PC-9 (cell line): ENCODE measurements at regions of chr6 and their contacts with region 1.

Region 1: GRCh38 chr6:25223490-25223991 is 55.6 kb upstream of the CARMIL1 start:
- DNase-seq: peak; percentile 59 to 71
- H3K4me3 ChIP-seq: no peak overlapping the region
- H3K27ac ChIP-seq: peak overlapping the region; percentile 20; the same call in 1 of the 2 replicates
- H3K4me1 ChIP-seq: peaks cover 7% of the 10 kb centered on the region; the same call in 1 of the 2 replicates
- H3K27me3 ChIP-seq: no peaks in the 10 kb centered on the region
- CTCF ChIP-seq: peak; percentile 95

Region 2: GRCh38 chr6:24631671-24632070 is 591.9 kb before region 1 on chr6:
- CTCF ChIA-PET with region 1: no interaction called
- POLR2A ChIA-PET with region 1: no interaction called
- intact Hi-C with region 1: no loop called
- DNase-seq: no peak
- H3K4me3 ChIP-seq: no peak overlapping the region
- H3K27ac ChIP-seq: no peak overlapping the region
- H3K4me1 ChIP-seq: no peaks in the 10 kb centered on the region
- H3K27me3 ChIP-seq: no peaks in the 10 kb centered on the region
- CTCF ChIP-seq: no peak

Region 3: DNA sequence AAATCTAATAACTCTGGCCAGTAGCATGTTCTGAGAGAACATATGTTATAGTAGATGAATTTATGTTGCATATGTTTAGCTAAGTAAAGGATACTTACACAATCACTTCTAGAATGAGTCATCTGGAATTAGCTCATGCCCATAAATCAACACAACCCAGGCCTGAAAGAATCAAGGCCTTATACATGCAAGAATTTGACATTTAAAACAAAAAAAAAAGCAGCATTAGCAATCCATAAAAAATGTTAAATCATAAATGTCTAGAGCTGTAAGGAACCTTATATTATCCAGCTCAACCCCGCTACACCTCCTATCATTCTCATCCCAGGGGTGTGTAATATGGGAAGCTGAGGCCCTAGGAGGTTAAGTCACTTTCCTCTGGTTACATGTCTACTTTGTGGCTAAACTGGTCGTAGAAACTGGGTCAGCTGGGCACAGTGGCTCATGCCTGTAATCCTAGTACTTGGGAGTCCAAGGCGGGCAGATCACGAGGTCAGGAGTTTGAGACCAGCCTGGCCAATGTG is 49.5 kb before region 1 on chr6:
- CTCF ChIA-PET with region 1: interaction called, 5 read pairs
- POLR2A ChIA-PET with region 1: no interaction called
- intact Hi-C with region 1: loop called (anchors 1 kb)
- DNase-seq: peak; percentile 66 to 98
- H3K4me3 ChIP-seq: no peak overlapping the region
- H3K27ac ChIP-seq: peak overlapping the region; percentile 98
- H3K4me1 ChIP-seq: peaks cover 56% of the 10 kb centered on the region
- H3K27me3 ChIP-seq: no peaks in the 10 kb centered on the region
- CTCF ChIP-seq: no peak

Region 4: DNA sequence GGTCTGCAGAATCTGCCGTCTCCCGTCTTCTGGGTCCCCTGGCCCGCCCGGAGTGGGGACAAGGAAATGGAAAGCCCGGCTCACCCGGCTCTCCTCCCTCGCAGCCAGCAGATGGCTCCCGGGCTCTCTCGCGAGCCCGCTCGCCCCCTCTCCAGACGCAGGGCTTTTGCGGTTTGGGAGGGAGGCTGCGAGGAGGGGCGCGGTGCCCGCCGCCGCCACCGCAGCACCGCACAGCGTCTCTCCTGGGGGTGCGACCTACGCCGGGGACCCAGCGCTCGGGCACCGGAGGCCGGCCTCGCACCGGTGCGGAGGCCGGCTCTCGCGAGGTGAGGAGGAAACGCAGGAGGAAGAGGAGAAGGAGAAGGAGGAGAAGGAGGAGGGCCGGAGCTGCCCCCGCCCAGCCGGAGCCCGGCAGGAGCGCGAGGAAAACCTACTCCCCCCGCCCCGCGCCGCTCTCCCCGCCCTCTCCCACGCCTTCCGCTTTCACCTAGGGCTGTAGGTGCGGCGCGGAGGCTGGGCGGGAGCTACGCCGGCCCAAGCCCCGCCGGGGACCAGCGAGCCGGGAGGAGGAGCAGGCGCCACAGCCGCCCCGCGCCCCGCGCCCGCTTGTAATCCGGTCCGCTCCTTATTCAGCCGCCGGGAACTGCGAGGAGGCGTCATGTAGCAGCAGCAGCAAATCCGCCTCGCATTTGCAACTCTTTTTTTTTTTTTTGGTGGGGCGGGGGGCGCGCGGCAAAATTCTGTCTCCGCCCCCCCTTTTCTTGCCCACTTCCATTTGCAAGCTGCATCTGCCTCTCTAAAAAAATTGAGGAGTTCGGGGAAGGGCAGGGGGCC is 55.6 kb after region 1 on chr6 and contains the start of gene CARMIL1:
- CTCF ChIA-PET with region 1: no interaction called
- POLR2A ChIA-PET with region 1: no interaction called
- intact Hi-C with region 1: loop called (anchors 1 kb)
- DNase-seq: peak; percentile 78 to 94
- H3K4me3 ChIP-seq: peak within 1 kb of the TSS; percentile 96
- H3K27ac ChIP-seq: peak within 1 kb of the TSS; percentile 62
- H3K4me1 ChIP-seq: peaks cover 21% of the 10 kb centered on the region
- H3K27me3 ChIP-seq: no peaks in the 10 kb centered on the region
- CTCF ChIP-seq: peak; percentile 66
- total RNA-seq, gene CARMIL1: 25.7 and 33.1 TPM in 2 replicates

Region 5: DNA sequence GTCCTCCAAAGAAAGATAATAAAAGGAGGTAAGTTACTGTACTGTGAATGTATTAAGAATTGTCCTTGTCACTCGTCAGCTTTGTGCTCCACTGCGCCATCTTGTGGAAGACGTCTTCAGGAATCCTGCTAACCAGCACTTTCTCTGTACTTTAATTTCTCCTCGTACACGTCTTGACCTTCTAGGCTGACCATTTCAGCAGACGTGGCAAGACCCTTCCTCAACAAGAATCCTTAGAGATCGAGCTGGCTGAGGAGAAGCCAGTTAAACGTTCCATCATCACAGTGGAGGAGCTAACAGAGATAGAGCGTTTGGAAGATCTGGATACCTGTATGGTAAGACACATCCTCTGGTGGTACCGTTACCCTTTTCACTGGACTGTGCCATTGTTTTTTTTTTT is 333.0 kb after region 1 on chr6:
- CTCF ChIA-PET with region 1: interaction called, 5 read pairs
- POLR2A ChIA-PET with region 1: no interaction called
- intact Hi-C with region 1: loop called (anchors 1 kb)
- DNase-seq: peak in 1 of 2 experiments; percentile 70
- H3K4me3 ChIP-seq: no peak overlapping the region
- H3K27ac ChIP-seq: no peak overlapping the region
- H3K4me1 ChIP-seq: 0 out of 2 replicates have a peak, but pooled peaks cover 4% of the 10 kb centered on the region
- H3K27me3 ChIP-seq: no peaks in the 10 kb centered on the region
- CTCF ChIP-seq: peak; percentile 88

Region 6: DNA sequence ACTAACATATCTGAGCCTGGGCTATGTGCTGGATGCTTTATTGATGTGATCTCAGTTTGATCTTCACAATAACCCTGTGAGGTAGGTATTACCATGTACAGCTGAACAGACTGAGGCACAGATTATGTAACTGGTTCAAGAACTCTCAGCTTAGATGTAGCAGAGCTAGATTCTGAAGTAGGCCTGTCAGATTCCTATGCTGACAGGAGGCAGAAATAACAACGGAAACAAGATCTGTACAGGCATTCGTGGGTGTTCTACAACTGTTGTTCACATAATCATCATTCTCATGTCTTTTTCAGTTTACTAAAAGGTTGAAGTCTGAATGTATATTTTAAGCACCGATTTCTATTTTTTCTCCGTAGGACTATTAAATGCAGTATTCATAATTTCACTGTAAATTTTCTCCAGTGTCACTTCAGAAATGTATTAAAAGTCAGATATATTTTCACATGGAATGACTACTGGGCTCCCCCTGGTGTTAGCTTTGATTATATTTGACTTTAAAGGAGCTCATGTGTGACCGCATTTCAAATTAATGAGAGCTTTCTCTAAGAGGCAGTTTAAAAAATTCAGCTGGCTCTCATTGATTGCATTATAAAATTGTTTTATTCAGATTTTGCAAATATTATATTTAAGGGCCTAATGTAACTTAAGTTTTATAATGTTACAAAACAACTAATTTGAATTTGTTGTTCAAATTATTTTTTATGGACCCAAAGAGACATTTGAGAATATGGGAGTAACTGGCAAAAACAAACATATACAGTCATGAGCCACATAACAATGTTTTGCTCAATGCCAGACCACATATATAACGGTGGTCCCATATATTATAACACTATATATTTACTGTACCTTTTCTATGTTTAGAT is 494.6 kb after region 1 on chr6:
- CTCF ChIA-PET with region 1: interaction called, 4 read pairs
- POLR2A ChIA-PET with region 1: no interaction called
- intact Hi-C with region 1: loop called (anchors 2 kb)
- DNase-seq: no peak
- H3K4me3 ChIP-seq: no peak overlapping the region
- H3K27ac ChIP-seq: no peak overlapping the region
- H3K4me1 ChIP-seq: no peaks in the 10 kb centered on the region
- H3K27me3 ChIP-seq: no peaks in the 10 kb centered on the region
- CTCF ChIP-seq: peak; percentile 83

Region 7: GRCh38 chr6:25942561-25943147 is 719.1 kb after region 1 on chr6:
- CTCF ChIA-PET with region 1: no interaction called
- POLR2A ChIA-PET with region 1: no interaction called
- intact Hi-C with region 1: loop called (anchors 2 kb)
- DNase-seq: no peak
- H3K4me3 ChIP-seq: no peak overlapping the region
- H3K27ac ChIP-seq: no peak overlapping the region
- H3K4me1 ChIP-seq: no peaks in the 10 kb centered on the region
- H3K27me3 ChIP-seq: no peaks in the 10 kb centered on the region
- CTCF ChIP-seq: peak; percentile 61; the same call in 1 of the 2 replicates

Region 8: DNA sequence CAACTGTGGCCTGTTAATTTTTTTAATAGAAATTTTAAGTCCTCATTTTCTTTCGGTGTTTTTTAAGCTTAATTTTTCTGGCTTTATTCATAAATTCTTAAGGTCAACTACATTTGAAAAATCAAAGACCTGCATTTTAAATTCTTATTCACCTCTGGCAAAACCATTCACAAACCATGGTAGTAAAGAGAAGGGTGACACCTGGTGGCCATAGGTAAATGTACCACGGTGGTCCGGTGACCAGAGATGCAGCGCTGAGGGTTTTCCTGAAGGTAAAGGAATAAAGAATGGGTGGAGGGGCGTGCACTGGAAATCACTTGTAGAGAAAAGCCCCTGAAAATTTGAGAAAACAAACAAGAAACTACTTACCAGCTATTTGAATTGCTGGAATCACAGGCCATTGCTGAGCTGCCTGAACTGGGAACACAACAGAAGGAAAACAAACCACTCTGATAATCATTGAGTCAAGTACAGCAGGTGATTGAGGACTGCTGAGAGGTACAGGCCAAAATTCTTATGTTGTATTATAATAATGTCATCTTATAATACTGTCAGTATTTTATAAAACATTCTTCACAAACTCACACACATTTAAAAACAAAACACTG is 873.8 kb after region 1 on chr6:
- CTCF ChIA-PET with region 1: no interaction called
- POLR2A ChIA-PET with region 1: no interaction called
- intact Hi-C with region 1: loop called (anchors 5 kb)
- DNase-seq: peak; percentile 53 to 61
- H3K4me3 ChIP-seq: no peak overlapping the region
- H3K27ac ChIP-seq: no peak overlapping the region
- H3K4me1 ChIP-seq: peaks cover 6% of the 10 kb centered on the region
- H3K27me3 ChIP-seq: no peaks in the 10 kb centered on the region
- CTCF ChIP-seq: peak; percentile 89